ENCODE measurements at regions of chr13 and their contacts with region 1.

Region 1: DNA sequence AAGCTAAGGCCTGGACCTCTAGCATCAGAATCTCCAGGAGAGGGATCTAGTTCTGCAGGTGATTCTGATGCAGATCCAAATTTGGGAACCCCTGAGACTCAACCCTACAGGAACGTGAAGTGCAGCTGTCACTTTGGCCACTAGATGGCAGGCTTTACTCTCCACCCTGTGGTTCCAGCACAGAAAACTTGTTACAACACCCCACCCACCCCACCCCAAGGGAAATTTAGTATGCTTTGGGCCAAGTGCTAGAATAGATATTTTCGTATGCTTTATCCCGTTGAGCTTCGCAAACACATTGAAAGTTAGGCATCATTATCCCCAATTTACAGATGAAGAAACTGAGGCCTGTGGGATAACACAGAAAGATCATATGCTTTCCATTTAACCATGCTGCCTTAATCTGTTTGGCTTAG is 232.0 kb downstream of the B3GLCT start:
- DNase-seq: peak; percentile 15 to 40 (median 38)
- H3K4me3 ChIP-seq: no peak overlapping the region
- H3K4me3 Mint-ChIP-seq: no peak overlapping the region
- H3K27ac ChIP-seq: no peak overlapping the region
- H3K27ac Mint-ChIP-seq: no peak overlapping the region
- H3K4me1 ChIP-seq: no peaks in the 10 kb centered on the region
- H3K4me1 Mint-ChIP-seq: peaks cover 1% of the 10 kb centered on the region
- H3K27me3 ChIP-seq: no peaks in the 10 kb centered on the region
- H3K27me3 Mint-ChIP-seq: peaks cover 2 to 6% (median 5%) of the 10 kb centered on the region in 3 donors
- CTCF ChIP-seq: peak; percentile 85

Region 2: DNA sequence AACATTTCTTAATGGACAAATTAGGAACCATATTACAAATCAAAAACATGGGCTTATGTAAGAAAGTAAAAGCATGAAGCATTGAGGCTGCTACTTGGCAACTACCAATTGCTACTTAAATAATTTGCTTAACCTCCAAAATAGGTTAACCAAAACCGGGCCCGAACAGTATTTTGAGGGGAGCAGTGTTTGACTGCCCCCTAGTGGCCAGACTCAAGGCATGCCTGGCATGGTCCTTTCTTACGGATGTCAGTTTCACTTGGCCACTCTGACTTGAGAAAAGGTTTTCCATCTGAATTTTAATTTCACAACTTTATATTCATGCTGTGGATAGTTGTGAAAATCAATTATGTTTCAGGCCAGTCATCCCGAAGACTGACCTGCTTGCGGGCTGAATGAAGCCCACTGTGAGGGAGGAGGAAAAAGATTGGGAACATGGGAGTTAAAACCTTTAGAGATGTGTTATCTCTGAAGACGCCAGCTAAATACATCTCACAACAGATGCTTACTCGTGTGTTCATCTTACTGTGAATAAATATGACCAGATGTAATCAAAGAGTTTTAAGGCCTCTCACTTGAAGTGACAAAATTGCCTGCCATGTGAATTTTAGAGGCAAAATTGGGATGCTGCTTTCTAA is 310.5 kb after region 1 on chr13:
- intact Hi-C with region 1: loop called (anchors 5 kb)
- DNase-seq: peak; percentile 50 to 66 (median 59)
- H3K4me3 ChIP-seq: no peak overlapping the region
- H3K4me3 Mint-ChIP-seq: peak overlapping the region; percentile 34 to 78
- H3K27ac ChIP-seq: no peak overlapping the region
- H3K27ac Mint-ChIP-seq: peak overlapping the region in 3 of 7 donors; percentile 27 to 80 (median 68)
- H3K4me1 ChIP-seq: peaks cover 5 to 14% of the 10 kb centered on the region in 2 donors
- H3K4me1 Mint-ChIP-seq: peaks cover 11% of the 10 kb centered on the region
- H3K27me3 ChIP-seq: no peaks in the 10 kb centered on the region
- H3K27me3 Mint-ChIP-seq: peaks cover 0 to 4% (median 2%) of the 10 kb centered on the region in 3 donors
- CTCF ChIP-seq: peak; percentile 99

Measured in CD14-positive monocyte (primary cell).